ENCODE measurements at regions of chr14 and their contacts with region 1.

Region 1: GRCh38 chr14:20606190-20606901 is 15.2 kb upstream of the RNASE12 start:
- DNase-seq: no peak
- ATAC-seq: no peak
- H3K4me3 ChIP-seq: no peak overlapping the region
- H3K27ac ChIP-seq: no peak overlapping the region
- H3K4me1 ChIP-seq: peaks cover 13% of the 10 kb centered on the region
- H3K27me3 ChIP-seq: no peaks in the 10 kb centered on the region
- CTCF ChIP-seq: peak; percentile 40

Region 2: DNA sequence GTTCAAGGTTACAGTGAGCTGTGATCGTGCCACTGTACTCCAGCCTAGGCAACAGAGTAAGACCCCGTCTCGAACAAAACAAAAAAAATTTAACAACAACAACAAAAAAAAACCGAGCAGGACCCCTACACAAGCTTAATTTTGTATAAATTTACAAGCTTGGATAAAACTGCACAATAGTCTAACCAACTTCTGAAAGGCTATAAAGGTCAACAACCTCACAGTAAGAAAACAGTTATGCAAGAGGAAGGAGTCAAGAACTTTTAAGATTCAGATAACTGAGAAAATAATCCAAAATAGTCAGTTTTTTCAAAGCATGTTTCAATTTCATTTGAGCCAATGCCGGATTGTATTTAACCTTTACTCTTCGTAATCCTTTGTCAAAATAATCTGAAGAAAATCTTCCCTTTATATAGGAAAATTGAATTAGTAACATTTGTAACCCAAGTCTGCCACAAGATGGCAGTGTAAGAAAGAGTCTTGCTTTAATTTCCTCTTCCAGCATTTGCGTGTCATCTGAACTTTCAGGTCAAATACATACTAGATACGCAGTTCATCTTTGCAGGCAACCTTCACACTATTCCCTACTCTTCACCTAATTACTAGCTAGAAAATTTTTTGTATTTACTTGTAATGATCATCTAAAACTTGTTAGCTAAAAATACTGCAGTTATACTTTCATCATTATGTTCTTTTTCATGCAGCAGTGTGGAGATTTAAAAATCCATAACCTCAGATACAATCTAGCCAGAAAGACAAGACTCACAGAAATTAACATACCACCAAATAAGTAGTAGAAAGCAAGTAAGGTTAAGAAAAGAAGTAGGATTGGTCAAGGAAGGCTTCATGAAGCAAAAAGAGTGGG is 279.1 kb before region 1 on chr14:
- intact Hi-C with region 1: loop called (anchors 2 kb)
- DNase-seq: no peak
- ATAC-seq: peak in 3 of 4 donors; percentile 57 to 84 (median 59)
- H3K4me3 ChIP-seq: no peak overlapping the region
- H3K27ac ChIP-seq: no peak overlapping the region
- H3K4me1 ChIP-seq: peaks cover 21% of the 10 kb centered on the region
- H3K27me3 ChIP-seq: no peaks in the 10 kb centered on the region
- CTCF ChIP-seq: peak; percentile 85